ENCODE measurements at regions of chr1 and their contacts with region 1.

Region 1: DNA sequence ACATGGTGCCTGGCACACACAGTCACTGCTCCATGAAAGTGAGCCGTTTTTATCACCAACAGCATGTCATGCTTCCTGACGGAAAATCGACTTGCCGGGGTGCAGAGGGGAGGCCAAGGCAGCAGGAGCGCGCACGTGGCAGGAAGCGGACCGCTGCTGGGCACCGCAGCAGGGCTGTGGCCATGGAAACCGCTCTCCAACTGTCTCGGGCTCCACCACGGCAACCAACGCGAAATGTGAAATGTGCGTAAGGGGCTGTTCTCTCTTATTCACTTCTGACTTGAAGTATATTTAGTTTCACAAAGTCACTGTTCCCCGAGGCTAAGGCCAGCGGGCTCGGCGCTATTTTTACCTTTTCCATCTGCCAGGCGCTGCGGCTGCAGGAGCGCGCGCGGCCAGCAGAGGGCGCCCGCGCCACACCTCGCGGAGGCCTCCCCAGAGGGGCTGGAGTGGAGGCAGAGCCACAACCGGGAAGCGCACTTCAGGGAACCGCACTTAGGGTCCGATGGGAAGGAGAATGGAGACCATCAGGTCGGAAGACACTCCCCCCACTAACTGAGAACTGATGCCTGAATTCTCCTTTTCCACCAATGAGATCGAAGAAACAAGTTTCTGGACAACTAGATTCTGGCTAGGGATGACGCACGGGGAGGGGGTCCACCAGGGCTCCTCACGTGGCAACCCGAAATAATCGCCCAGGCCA is 19.7 kb downstream of the RCC2 start:
- DNase-seq: peak; percentile 57
- H3K4me3 ChIP-seq: no peak overlapping the region
- H3K27ac ChIP-seq: no peak overlapping the region
- H3K4me1 ChIP-seq: no peaks in the 10 kb centered on the region
- H3K27me3 ChIP-seq: no peaks in the 10 kb centered on the region
- CTCF ChIP-seq: peak; percentile 99
- POLR2A ChIP-seq: no peak

Region 2: DNA sequence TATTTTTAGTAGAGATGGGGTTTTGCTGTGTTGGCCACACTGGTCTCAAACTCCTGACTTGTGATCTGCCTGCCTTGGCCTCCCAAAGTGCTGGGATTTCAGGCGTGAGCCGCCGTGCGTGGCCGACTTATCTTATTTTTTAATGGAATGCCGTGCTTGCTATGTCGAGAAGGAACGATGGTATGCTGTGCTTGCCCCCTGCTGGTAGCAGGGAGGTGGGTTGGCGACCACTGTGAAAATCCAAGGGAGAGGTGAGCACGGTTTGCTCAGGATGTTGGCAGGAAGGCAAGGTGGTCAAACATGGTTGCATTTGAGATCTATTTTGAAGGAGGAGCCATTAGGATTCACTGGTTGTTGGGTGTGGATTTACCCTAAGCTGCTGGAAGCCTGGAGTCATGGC is 65.5 kb after region 1 on chr1:
- CTCF ChIA-PET with region 1: no interaction called
- POLR2A ChIA-PET with region 1: no interaction called
- dilution Hi-C with region 1: no loop called
- intact Hi-C with region 1: loop called (anchors 1 kb)
- DNase-seq: no peak
- H3K4me3 ChIP-seq: no peak overlapping the region
- H3K27ac ChIP-seq: no peak overlapping the region
- H3K4me1 ChIP-seq: no peaks in the 10 kb centered on the region
- H3K27me3 ChIP-seq: no peaks in the 10 kb centered on the region
- CTCF ChIP-seq: peak; percentile 20 to 42
- POLR2A ChIP-seq: no peak

Measured in endothelial cell of umbilical vein (primary cell).